Adrenal gland (tissue), 19 donors: ENCODE measurements at regions of chr12 and their contacts with region 1.

Region 1: GRCh38 chr12:54207484-54208294 is 18.9 kb upstream of the SMUG1 start:
- DNase-seq: peak; percentile 47 to 88 (median 73)
- H3K4me3 ChIP-seq: no peak overlapping the region
- H3K27ac ChIP-seq: no peak overlapping the region
- H3K4me1 ChIP-seq: no peaks in the 10 kb centered on the region
- H3K27me3 ChIP-seq: peaks cover 8% of the 10 kb centered on the region
- CTCF ChIP-seq: peak; percentile 79 to 95 (median 86)
- POLR2A ChIP-seq: no peak

Region 2: DNA sequence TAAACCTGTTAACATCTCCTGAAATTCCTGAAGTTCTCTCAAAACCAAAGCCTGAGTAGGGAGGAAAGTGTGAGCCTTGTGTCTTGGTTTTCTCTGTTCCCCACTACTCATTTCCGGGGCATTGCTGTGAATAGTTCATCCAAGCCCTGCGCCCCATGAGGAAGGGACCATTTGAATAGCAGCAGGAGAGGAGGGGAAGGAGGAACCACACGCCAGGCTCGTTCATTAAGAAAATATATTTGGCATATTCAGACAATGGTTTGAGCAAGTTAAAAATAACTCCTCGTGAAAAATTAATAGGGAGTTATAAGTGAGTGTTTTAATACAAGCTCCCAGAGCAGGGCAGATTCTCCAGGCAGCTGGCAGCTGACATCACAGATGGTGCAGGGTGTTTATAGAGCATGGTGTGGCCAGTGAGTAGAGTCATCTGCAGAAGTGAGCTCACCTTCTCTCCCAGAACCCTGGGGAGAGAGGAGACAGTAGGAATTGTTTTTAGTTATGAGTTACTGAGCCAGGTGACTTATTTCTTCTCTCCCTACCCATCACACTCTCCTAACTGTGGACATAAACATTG is 426.4 kb before region 1 on chr12:
- intact Hi-C with region 1: no loop called
- DNase-seq: no peak
- H3K4me3 ChIP-seq: no peak overlapping the region
- H3K27ac ChIP-seq: no peak overlapping the region
- H3K4me1 ChIP-seq: no peaks in the 10 kb centered on the region
- H3K27me3 ChIP-seq: peaks cover 21% of the 10 kb centered on the region
- CTCF ChIP-seq: no peak
- POLR2A ChIP-seq: no peak

Region 3: DNA sequence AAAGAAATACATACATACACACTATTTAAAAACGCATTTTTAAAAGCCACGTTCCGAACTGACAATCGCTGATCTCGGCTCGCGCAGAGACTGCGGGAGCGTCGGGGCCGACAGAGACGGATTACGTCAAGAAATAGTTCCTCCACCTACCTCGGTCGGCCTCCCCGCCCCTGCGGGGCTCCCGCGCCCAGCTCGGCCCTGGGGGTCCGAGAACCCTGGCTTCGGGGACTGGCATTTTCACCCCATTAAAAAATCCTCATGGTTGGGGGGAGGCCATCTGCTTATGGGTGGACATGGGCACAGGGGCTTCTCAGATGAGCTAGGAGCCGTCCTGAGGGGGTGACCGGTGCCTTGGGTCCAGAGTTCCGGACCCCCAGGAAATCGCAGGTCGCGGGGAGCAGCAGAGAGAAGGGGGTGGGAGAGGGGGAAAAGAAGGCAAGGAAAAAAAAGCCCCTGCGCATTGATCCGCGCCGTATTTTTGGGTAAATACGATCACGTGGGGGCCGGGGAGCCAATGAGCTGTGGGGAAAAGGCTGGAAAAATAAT is 208.1 kb before region 1 on chr12:
- intact Hi-C with region 1: loop called in 1 of 2 experiments (anchors 5 kb)
- DNase-seq: peak in 6 of 7 donors; percentile 50 to 92 (median 72)
- H3K4me3 ChIP-seq: peak overlapping the region in 2 of 4 donors; percentile 37 to 60
- H3K27ac ChIP-seq: peak overlapping the region in 2 of 5 donors; percentile 75 to 82
- H3K4me1 ChIP-seq: peaks cover 14 to 21% of the 10 kb centered on the region in 2 donors
- H3K27me3 ChIP-seq: peaks cover 19% of the 10 kb centered on the region
- CTCF ChIP-seq: no peak
- POLR2A ChIP-seq: no peak

Region 4: DNA sequence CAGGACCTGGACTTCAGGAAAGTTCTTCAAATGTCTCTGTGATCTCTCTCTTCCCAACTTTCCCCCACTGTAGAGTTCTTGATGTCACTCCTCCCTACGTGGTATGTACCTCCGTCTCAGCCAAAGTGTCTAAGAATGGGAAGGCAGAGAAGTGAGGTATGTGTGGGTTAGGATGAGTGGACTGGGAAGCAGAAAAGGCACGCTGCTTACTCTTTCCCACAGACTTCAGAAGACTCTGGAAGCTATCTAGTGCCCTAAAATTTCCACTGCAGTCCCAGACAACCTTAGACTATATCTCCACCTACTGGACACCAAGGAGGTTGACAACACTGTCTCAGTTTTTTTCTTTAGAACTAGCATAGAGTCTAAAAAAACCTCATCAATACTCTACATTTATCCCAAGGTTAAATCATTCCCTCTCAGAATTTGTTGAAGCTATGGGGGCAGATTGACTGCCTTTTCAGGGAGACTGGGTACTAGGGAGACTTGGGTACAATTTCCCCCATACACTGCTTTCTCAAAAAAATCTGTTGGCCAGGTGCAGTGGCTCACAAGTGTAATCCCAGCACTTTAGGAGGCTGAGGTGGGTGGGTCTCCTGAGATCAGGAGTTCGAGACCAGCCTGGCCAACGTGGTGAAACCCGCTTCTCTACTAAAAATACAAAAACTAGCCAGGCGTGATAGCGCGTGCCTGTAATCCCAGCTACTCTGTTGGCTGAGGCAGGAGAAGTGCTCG is 232.0 kb after region 1 on chr12:
- intact Hi-C with region 1: no loop called
- DNase-seq: peak in 2 of 7 donors; percentile 31 to 37
- H3K4me3 ChIP-seq: no peak overlapping the region
- H3K27ac ChIP-seq: no peak overlapping the region
- H3K4me1 ChIP-seq: peaks cover 0 to 5% of the 10 kb centered on the region in 2 donors
- H3K27me3 ChIP-seq: peaks cover 4% of the 10 kb centered on the region
- CTCF ChIP-seq: peak; percentile 70 to 94 (median 90)
- POLR2A ChIP-seq: no peak